ENCODE measurements at regions of chr7 and their contacts with region 1.

Region 1: DNA sequence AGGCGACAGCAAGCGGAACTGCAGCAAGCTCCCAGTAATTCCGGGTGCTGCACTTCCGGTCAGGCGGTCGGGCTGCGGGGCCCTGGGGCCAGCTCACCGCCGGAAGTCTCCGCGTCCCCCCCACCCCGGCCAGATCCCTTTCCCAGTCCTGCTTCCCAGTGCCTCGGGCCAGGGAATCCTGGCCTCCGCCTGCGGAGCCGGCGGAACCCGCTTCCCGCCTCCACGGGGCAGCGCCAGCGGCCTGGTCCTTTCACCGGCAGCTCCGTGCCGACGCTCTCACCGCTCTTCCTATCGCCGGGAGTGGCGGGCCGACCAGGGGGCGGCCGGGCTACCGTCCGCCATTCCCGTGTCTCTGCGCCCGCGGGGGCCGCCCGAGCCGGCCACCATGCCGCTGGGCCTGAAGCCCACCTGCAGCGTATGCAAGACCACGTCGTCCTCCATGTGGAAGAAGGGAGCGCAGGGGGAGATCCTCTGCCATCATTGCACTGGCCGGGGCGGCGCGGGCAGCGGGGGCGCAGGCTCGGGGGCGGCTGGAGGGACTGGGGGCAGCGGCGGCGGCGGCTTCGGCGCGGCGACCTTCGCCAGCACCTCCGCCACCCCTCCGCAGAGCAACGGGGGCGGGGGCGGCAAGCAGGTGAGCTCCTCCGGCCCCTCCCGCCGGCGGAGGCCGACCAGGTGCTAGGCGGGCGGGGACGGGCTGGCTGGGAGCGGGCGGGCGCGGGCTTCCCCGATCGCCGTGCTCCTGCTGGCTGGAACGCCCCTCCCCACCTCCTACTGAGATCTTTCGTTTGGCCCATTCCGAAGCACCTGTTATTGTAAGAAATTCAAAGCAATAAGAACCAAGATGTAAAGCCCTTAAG is at the start of gene GATAD1:
- DNase-seq: no peak
- ATAC-seq: peak; percentile 99
- H3K4me3 ChIP-seq: peak within 1 kb of the TSS; percentile 72 to 99
- H3K27ac ChIP-seq: peak within 1 kb of the TSS; percentile 89
- H3K4me1 ChIP-seq: peaks cover 7% of the 10 kb centered on the region
- H3K27me3 ChIP-seq: no peaks in the 10 kb centered on the region
- CTCF ChIP-seq: peak; percentile 93
- total RNA-seq, gene GATAD1: 27.0 TPM

Region 2: GRCh38 chr7:92052684-92053083 is 394.9 kb before region 1 on chr7:
- CTCF ChIA-PET with region 1: interaction called, 10 read pairs
- POLR2A ChIA-PET with region 1: no interaction called
- in situ Hi-C with region 1: no loop called
- intact Hi-C with region 1: no loop called
- DNase-seq: no peak
- ATAC-seq: no peak
- H3K4me3 ChIP-seq: no peak overlapping the region
- H3K27ac ChIP-seq: no peak overlapping the region
- H3K4me1 ChIP-seq: no peaks in the 10 kb centered on the region
- H3K27me3 ChIP-seq: no peaks in the 10 kb centered on the region
- CTCF ChIP-seq: no peak

Region 3: DNA sequence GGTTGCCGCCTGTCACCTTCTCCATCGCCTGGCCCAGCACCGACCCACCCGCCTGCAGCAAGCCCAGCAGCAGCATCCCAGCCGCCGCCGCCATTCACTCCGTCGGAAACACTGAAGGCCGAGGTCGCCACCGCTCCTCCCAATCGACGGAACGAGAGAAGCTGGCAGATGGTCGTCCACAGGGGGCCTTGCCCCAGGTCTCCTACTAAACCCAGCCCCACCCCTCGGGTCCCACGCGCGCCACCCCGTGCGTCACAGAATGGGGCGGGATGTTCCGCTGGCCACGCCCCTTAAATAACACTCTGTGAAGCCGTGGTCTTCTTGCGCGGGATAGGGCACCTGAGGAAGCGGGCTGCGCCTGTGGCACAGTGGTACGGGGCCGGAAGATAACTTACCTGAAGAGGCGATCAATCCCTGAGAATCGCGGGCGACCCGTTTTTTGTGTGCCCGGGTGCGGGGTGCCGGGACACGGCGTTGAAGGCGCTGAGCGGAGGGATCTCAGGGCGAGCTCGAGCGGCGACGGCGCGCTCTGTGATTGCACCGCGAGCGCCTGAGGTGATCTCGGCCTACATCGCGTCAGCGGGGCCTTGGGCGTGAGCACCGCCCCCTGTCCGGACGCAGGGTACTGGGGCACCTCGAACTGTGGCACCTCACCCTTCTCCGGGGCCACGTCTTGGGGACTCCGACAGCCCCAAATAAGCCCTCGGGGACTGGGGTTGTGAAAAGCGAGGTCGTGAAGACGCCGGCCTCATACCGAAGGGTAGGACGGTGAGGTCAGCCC is 313.1 kb before region 1 on chr7 and contains the start of gene CYP51A1:
- CTCF ChIA-PET with region 1: interaction called, 7 read pairs
- POLR2A ChIA-PET with region 1: no interaction called
- in situ Hi-C with region 1: no loop called
- intact Hi-C with region 1: loop called (anchors 10 kb)
- DNase-seq: peak; percentile 81
- ATAC-seq: peak; percentile 94
- H3K4me3 ChIP-seq: peak within 1 kb of the TSS; percentile 91 to 93
- H3K27ac ChIP-seq: peak within 1 kb of the TSS; percentile 90
- H3K4me1 ChIP-seq: peaks cover 18% of the 10 kb centered on the region
- H3K27me3 ChIP-seq: no peaks in the 10 kb centered on the region
- CTCF ChIP-seq: no peak
- total RNA-seq, gene CYP51A1: 131 TPM

Region 4: DNA sequence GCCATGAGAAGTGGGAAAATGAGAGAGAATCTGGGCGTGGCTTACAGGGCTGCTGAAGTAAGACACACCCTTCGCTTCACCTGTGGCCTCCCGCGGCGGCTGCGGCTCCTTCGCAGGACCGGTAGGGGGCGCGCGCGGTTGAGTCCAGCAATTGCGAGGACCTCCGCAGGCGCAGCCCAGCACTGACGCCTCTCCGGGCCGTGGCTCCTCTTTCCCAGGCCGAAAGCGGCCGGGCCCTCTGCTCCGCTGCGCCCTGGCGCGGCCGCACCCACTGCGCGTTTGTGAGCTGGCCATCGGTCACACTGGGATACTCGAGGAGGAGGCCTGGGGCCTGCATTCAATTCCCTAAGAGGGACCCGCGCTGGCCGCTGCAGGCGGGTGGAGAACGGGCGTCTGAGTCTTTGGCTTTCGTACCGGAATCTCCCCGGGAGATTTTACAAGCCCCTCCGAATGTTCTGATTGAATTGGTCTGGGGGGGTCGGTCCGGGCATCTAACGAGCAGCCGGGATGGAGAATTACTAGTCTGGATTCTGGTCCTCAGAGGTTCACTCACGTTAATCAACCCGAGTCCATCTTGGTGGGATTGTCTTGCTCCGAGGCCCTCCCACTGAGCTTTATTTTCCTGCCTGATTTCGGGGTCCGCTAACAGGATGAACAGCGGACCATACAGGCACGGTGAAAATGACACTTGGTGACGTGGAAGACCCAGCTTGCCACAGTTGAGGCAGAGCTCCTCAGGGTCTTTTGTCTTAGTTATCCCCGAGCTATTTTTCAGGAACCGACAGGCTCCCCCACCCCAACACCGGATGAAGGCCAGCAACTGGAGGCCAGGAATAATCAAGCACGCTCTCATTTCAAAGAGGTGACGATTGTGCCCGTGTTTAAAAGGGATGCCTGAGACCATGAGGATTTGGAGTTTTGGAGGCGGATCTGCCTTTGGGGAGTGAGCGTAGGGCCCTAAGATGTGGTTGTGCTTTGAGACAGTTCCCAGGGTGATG is 268.3 kb before region 1 on chr7 and contains the start of gene LRRD1:
- CTCF ChIA-PET with region 1: no interaction called
- POLR2A ChIA-PET with region 1: interaction called, 7 read pairs
- in situ Hi-C with region 1: no loop called
- intact Hi-C with region 1: loop called (anchors 2 kb)
- DNase-seq: peak; percentile 53
- ATAC-seq: peak; percentile 98
- H3K4me3 ChIP-seq: peak within 1 kb of the TSS; percentile 47 to 71
- H3K27ac ChIP-seq: peak within 1 kb of the TSS; percentile 30; the same call in 1 of the 2 replicates
- H3K4me1 ChIP-seq: 0 out of 2 replicates have a peak, but pooled peaks cover 3% of the 10 kb centered on the region
- H3K27me3 ChIP-seq: 0 out of 2 replicates have a peak, but pooled peaks cover 2% of the 10 kb centered on the region
- CTCF ChIP-seq: peak; percentile 99
- total RNA-seq, gene LRRD1: 0.05 TPM

Region 5: GRCh38 chr7:92425321-92425947 is 22.1 kb before region 1 on chr7:
- CTCF ChIA-PET with region 1: interaction called, 29 read pairs
- POLR2A ChIA-PET with region 1: no interaction called
- in situ Hi-C with region 1: no loop called
- intact Hi-C with region 1: loop called (anchors 1 kb)
- DNase-seq: no peak
- ATAC-seq: peak; percentile 75
- H3K4me3 ChIP-seq: peak overlapping the region; percentile 39 to 78
- H3K27ac ChIP-seq: peak overlapping the region; percentile 5; the same call in 1 of the 2 replicates
- H3K4me1 ChIP-seq: peaks cover 6% of the 10 kb centered on the region; the same call in 1 of the 2 replicates
- H3K27me3 ChIP-seq: no peaks in the 10 kb centered on the region
- CTCF ChIP-seq: peak; percentile 48

Measured in Panc1 (cell line).